ENCODE measurements at regions of chr11 and their contacts with region 1.

Region 1: DNA sequence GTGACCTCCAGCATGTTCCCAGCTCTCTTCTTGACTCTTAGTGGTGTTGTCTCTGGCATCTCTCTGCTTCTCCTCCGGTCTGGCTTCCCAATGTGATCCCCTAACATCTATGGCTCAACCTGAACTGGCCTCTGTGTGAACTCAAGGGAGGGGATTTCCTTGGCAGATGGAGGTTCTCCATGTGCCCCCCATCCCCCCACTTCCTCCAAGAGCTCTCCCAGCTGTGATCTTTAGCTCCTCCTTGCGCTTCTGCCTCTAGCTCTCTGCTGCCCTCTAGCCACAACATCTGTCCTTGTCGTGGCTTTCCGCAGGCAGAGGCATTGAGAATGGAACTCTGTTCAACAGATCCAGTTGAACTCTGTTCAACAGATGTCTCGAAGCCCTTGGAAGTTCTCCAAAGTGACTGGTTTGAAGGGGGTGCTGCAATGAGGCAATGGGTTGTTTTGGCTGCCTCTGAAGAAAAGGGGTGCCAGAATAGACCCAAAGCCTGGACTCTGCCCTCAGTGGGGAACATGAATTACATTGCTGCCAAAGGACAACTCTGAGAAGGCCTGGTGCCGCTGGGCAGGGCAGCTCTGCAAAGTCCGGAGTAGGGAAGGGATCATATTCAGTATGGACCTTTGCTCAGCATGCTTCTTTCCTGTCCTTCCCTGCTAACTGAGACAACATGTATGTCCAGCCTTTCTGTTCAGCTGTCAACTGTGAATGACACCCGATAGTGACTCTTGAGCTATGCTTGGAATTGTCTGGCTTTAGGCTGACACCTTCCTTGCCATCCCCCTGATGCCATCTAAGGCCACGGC is 61.9 kb downstream of the ADM start:
- DNase-seq: peak; percentile 82 to 88
- ATAC-seq: peak; percentile 87 to 94 (median 92)
- H3K4me3 ChIP-seq: no peak overlapping the region
- H3K27ac ChIP-seq: peak overlapping the region; percentile 77
- H3K4me1 ChIP-seq: peaks cover 11% of the 10 kb centered on the region
- H3K27me3 ChIP-seq: no peaks in the 10 kb centered on the region
- CTCF ChIP-seq: peak; percentile 82

Region 2: DNA sequence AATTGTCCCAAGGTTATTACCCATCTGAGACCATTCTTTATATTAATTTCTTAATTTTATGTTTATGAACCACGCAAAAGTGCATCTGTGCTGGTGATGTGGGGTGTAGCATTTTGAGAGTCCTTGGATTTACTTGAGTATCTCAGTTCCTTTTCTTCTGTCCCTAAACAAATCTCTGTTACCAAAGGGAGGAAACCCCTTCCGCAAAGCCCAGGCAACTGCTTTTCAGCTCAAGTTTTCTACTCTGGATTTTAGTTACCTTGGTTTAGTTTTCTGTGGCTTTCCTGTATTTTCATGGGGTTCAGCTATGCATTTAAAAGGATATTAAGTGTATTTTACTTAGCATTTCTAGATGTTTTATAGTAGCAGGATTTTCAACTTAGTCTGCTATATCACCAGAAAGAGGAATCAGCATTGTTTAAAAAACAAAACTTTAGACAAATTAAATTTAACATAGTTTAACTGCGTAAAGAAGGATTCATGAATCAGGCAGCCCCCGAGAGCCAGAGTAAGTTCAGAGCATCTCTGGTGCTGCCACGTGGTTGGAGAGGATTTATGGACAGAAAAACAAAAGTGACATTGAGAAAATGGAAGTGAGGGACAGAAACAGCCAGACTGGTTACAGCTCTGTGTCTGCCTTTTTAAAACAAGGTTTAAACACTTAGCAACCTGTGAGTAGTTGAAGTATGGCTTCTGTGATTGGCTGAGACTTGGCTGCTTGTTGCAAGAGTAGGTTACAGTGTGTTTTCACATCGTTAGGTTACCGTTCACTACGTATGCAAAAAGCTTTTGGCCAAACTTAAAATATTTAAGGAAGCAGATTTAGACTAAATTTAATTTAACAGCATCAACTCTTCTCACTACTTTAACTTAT is 52.3 kb before region 1 on chr11:
- intact Hi-C with region 1: loop called in 1 of 2 experiments (anchors 10 kb)
- DNase-seq: no peak
- ATAC-seq: no peak
- H3K4me3 ChIP-seq: no peak overlapping the region
- H3K27ac ChIP-seq: no peak overlapping the region
- H3K4me1 ChIP-seq: peaks cover 34% of the 10 kb centered on the region
- H3K27me3 ChIP-seq: no peaks in the 10 kb centered on the region
- CTCF ChIP-seq: no peak

Region 3: GRCh38 chr11:10338287-10338686 is 28.5 kb before region 1 on chr11:
- intact Hi-C with region 1: no loop called
- DNase-seq: no peak
- ATAC-seq: no peak
- H3K4me3 ChIP-seq: no peak overlapping the region
- H3K27ac ChIP-seq: no peak overlapping the region
- H3K4me1 ChIP-seq: no peaks in the 10 kb centered on the region
- H3K27me3 ChIP-seq: no peaks in the 10 kb centered on the region
- CTCF ChIP-seq: no peak

Region 4: GRCh38 chr11:10478574-10479550 is 112.1 kb after region 1 on chr11:
- intact Hi-C with region 1: no loop called
- DNase-seq: no peak
- ATAC-seq: peak in 1 of 4 donors; percentile 32
- H3K4me3 ChIP-seq: no peak overlapping the region
- H3K27ac ChIP-seq: no peak overlapping the region
- H3K4me1 ChIP-seq: peaks cover 15% of the 10 kb centered on the region
- H3K27me3 ChIP-seq: no peaks in the 10 kb centered on the region
- CTCF ChIP-seq: no peak

Measured in psoas muscle (tissue), 8 donors.